ENCODE measurements at regions of chr11 and their contacts with region 1.

Region 1: GRCh38 chr11:57567515-57568329 is at the start of gene UBE2L6:
- DNase-seq: peak; percentile 56 to 90 (median 85)
- ATAC-seq: peak in 3 of 4 donors; percentile 80 to 87 (median 85)
- H3K4me3 ChIP-seq: peak within 1 kb of the TSS; percentile 57 to 96 (median 78)
- H3K27ac ChIP-seq: peak within 1 kb of the TSS; percentile 61 to 94 (median 84)
- H3K4me1 ChIP-seq: peaks cover 0 to 65% (median 14%) of the 10 kb centered on the region in 12 donors
- H3K27me3 ChIP-seq: no peaks in the 10 kb centered on the region
- CTCF ChIP-seq: peak in 7 of 12 donors; percentile 81 to 94 (median 86)
- POLR2A ChIP-seq: no peak
- total RNA-seq, gene UBE2L6: 11.2 to 175 (median 14.5) TPM

Region 2: DNA sequence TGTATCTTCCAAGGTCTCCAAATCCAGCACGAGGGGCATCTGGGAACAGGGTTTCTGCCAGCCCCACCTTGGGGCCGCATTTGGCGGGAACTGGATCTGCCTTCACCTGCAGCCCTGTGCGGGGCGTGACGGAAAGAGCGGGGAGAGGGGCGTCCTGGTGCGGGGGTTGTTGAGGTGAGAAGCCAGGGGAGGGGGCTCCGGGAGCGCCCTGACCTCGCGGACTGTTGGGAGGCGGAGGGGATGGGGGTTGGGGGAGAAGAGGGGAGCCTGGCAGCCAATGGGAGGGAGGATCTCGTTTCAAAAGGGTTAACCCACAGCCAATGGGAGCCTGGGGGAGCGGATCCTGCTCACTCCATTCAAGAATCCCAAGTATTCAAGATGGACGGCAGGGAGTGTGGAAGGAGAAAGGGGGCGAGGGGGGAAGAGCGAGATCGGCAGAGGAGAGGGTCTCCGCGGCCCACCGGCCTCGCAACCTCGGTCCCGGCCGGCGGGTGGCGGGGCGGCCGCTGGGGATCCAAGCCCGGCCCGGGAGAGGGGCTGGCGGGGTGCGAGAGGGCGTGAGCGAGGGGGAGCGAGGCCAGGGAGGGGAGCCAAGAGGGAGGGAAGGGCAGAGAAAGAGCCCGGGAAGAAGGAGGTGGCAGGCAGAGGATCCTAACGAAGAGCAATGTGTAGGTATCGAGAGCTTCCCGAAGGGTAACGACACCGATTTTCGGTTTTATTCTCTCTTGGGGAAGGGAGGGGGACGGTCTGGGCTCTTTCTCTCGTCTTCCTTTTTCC is 70.5 kb after region 1 on chr11:
- intact Hi-C with region 1: loop called in 8 of 10 experiments (anchors 1 to 2 kb)
- DNase-seq: peak; percentile 76 to 80 (median 79)
- ATAC-seq: peak; percentile 90 to 95 (median 92)
- H3K4me3 ChIP-seq: peak overlapping the region; percentile 40 to 97 (median 86)
- H3K27ac ChIP-seq: peak overlapping the region in 11 of 12 donors; percentile 17 to 87 (median 79)
- H3K4me1 ChIP-seq: peaks cover 0 to 33% (median 22%) of the 10 kb centered on the region in 12 donors
- H3K27me3 ChIP-seq: peaks cover 0 to 6% (median 0%) of the 10 kb centered on the region in 9 donors
- CTCF ChIP-seq: peak in 1 of 12 donors; percentile 3
- POLR2A ChIP-seq: peak in 1 of 2 donors; percentile 37

Region 3: DNA sequence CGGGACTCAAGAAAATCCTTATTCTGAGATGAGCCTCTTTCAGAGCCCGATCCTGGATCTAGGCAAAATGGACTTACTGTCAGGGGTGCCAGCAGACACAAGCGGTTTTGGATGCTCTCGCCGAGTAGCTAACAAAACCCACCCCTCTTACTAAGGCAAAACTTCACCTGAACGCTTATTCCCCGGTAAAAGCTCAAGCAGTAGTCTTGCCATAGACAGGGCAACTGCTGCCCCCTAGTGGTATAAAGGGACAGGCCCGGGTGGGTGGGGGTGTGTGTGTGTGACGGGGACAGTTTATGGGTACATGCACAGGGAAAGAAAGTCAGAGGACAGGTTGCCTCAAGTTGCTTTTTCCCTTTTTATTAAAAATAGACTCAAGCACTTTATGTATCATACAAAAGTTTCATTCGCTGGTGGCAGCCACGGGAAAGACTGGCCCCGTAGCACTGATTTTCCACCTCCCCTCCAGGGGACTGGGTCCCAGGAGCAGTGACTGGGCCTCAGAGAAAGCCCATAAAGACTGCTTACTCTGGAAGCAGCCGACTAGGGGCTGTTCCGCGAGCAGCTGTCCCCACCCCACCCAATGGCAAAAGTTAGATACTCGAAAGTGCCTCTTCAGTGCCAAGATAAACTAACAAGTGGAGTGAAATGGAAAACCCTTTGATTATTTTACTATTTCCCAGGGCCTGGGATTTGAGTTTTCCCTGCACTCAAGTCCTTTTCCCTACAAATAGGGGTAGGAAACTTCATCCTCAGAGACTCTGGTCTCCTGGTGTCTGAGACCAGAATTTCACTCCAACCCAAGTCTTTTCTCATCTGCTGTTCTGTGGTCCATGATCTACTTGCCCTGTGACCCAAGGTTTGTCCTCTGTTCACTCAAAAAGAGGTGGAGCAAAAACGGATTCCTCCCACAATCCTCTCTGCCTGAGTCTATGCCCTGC is 77.3 kb after region 1 on chr11:
- intact Hi-C with region 1: loop called in 9 of 10 experiments (anchors 1 to 5 kb)
- DNase-seq: peak; percentile 74 to 83 (median 82)
- ATAC-seq: peak in 3 of 4 donors; percentile 74 to 80 (median 80)
- H3K4me3 ChIP-seq: peak overlapping the region in 3 of 12 donors; percentile 2 to 21 (median 19)
- H3K27ac ChIP-seq: peak overlapping the region in 10 of 12 donors; percentile 10 to 69 (median 56)
- H3K4me1 ChIP-seq: peaks cover 2 to 75% (median 46%) of the 10 kb centered on the region in 12 donors
- H3K27me3 ChIP-seq: peaks cover 4 to 43% (median 34%) of the 10 kb centered on the region in 9 donors
- CTCF ChIP-seq: peak; percentile 77 to 91 (median 86)
- POLR2A ChIP-seq: no peak